HAP-1 (cell line): ENCODE measurements at regions of chr9 and their contacts with region 1.

Region 1: DNA sequence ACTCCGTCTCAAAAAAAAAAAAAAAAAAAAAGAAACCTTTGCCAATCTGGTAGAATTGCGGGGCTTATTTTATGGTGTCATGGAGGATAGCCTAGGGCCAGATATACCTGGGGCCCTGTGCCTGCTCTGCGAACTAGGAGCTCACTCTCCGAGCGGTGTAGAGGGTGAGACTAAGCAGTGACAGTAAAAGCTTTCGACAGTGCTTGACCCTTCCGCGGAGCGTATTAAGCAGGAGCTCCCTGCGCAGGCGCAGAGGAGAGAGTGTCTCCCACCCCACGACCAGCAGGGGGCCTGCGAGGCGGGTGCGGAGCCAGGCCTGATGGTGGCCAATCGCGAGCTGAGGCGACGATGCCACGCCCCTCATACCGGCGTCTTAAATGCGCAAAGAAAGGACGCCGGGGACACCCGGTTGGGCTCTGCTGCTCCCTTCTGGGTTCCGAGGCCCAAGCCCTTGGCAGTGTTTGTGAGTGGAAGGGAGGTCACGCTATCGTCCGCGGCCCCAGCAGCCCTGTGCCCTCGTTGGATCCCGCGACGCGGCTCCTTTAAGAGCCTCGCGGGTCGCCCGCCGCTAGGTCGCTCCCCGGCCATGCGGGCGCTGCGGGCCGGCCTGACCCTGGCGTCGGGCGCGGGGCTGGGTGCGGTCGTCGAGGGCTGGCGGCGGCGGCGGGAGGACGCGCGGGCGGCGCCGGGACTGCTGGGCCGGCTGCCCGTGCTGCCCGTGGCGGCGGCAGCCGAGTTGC is at the start of gene ENDOG:
- DNase-seq: peak; percentile 98 to 99
- H3K4me3 ChIP-seq: peak within 1 kb of the TSS; percentile 47
- H3K4me1 ChIP-seq: peaks cover 10% of the 10 kb centered on the region
- H3K27me3 ChIP-seq: no peaks in the 10 kb centered on the region

Region 2: GRCh38 chr9:128733256-128733655 is 85.0 kb before region 1 on chr9:
- in situ Hi-C with region 1: loop called (anchors 10 kb)
- DNase-seq: peak; percentile 91 to 93
- H3K4me3 ChIP-seq: no peak overlapping the region
- H3K4me1 ChIP-seq: no peaks in the 10 kb centered on the region
- H3K27me3 ChIP-seq: no peaks in the 10 kb centered on the region